HepG2 (cell line): ENCODE measurements at regions of chr19 and their contacts with region 1.

Region 1: DNA sequence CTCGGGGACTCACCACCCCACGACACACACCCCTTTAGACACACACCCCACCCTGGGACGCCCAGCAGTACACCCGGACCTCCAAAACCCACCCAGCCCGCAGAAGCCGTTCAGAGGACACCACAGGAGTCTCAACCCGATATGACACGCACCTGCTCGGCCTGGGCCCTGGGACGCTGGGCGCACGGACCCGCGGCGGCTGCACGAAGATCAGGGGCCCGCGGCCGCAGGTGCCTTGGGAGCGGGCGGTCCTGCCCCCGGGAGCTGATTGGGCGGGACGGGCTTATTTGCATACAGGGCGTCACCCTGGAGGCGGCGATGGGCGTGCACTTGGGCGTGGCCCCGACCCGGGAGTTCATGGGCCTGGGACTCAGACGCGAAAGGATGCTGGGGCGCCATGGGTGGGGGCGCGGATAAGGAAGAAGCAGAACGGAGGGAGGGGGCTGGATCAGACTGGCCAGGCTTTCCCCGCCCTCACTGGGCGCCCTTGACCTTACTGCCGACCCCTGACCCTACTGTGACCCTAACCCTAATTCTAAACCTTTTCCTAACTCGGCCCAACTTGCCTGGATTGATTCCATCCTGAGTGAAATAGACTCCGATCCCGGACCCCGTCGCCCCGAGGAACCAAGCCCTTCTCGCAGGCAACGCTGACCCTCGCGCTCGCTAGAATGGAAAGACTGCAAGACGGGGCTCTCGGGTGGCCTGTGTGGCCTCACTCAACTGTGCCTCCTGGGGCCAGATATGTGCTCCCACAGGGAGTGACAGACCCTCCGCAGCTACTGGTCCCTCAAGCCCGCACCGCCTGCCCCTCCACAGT is at the start of gene MEF2B:
- DNase-seq: peak; percentile 80
- ATAC-seq: peak; percentile 92
- H3K4me3 ChIP-seq: peak within 1 kb of the TSS; percentile 35 to 70 (median 54)
- H3K27ac ChIP-seq: no peak within 1 kb of the TSS
- H3K4me1 ChIP-seq: peaks cover 63% of the 10 kb centered on the region
- H3K27me3 ChIP-seq: no peaks in the 10 kb centered on the region
- CTCF ChIP-seq: no peak
- EP300 ChIP-seq: no peak
- POLR2A ChIP-seq: peak in 1 of 2 experiments; percentile 46; a peak in 2 of 4 replicates
- RAD21 ChIP-seq: no peak
- total RNA-seq, gene MEF2B: 0.44 and 1.2 TPM in 2 replicates

Region 2: GRCh38 chr19:19145684-19146608 is 24.3 kb before region 1 on chr19:
- CTCF ChIA-PET with region 1: interaction called, 88 read pairs
- POLR2A ChIA-PET with region 1: interaction called, 3 read pairs
- in situ Hi-C with region 1: loop called (anchors 5 kb)
- intact Hi-C with region 1: loop called (anchors 1 kb)
- DNase-seq: peak; percentile 35
- ATAC-seq: peak; percentile 83
- H3K4me3 ChIP-seq: no peak overlapping the region
- H3K27ac ChIP-seq: no peak overlapping the region
- H3K4me1 ChIP-seq: no peaks in the 10 kb centered on the region
- H3K27me3 ChIP-seq: no peaks in the 10 kb centered on the region
- CTCF ChIP-seq: peak; percentile 98
- EP300 ChIP-seq: no peak
- POLR2A ChIP-seq: no peak
- RAD21 ChIP-seq: peak; percentile 90

Region 3: GRCh38 chr19:19157808-19158207 is 12.5 kb before region 1 on chr19:
- CTCF ChIA-PET with region 1: no interaction called
- POLR2A ChIA-PET with region 1: interaction called, 11 read pairs
- in situ Hi-C with region 1: no loop called
- intact Hi-C with region 1: no loop called
- DNase-seq: no peak
- ATAC-seq: no peak
- H3K4me3 ChIP-seq: no peak overlapping the region
- H3K27ac ChIP-seq: no peak overlapping the region
- H3K4me1 ChIP-seq: no peaks in the 10 kb centered on the region
- H3K27me3 ChIP-seq: no peaks in the 10 kb centered on the region
- CTCF ChIP-seq: no peak
- EP300 ChIP-seq: no peak
- POLR2A ChIP-seq: no peak
- RAD21 ChIP-seq: no peak